Ovary (tissue), 10 donors: ENCODE measurements at regions of chr1 and their contacts with region 1.

Region 1: DNA sequence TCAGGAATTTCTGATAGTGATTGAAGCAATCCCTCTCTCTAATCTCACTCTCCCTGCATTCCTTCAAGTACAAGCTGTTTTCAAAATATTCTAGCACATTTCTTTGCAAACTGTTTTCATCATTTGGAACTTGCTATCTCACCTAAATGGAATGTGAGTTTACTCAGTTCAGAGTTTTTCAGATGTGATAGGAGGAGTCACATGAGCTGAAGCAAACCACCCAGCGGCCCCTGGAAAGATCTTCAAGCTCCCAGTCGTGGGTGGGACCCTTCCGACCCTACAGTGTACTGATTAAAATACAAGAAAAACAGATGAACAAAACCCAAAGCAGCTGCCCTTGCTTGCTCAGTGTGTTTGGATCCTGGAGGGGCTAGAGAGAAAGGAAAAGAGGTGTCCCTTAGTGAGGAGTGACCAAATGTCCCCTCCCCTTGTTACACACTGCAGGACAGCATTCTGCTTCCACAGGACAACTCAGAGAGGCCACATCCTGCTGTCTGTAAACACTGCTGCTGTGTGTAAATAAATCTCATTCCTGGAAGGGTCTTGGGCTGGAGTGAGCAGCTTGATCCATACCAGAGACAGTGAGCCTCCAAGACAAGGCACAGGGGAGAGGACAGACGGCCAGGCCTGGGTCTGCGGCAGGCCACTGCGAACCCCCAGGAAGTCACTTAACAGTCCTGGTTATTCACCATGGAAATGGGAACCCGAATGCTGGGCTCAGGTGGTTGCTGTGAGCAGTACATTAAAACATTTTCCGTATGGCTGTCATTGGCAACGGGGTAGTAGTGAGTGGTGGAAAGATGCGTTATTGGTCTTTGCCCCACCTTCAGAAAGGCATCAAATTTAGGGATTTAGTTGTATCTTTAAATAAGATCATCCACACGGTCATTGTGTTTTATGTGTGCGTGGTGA is 229.2 kb downstream of the RHOU start:
- DNase-seq: peak; percentile 50 to 82 (median 65)
- H3K4me3 ChIP-seq: no peak overlapping the region
- H3K27ac ChIP-seq: peak overlapping the region; percentile 57 to 70
- H3K4me1 ChIP-seq: peaks cover 7% of the 10 kb centered on the region
- H3K27me3 ChIP-seq: no peaks in the 10 kb centered on the region
- CTCF ChIP-seq: no peak
- EP300 ChIP-seq: no peak
- POLR2A ChIP-seq: no peak

Region 2: DNA sequence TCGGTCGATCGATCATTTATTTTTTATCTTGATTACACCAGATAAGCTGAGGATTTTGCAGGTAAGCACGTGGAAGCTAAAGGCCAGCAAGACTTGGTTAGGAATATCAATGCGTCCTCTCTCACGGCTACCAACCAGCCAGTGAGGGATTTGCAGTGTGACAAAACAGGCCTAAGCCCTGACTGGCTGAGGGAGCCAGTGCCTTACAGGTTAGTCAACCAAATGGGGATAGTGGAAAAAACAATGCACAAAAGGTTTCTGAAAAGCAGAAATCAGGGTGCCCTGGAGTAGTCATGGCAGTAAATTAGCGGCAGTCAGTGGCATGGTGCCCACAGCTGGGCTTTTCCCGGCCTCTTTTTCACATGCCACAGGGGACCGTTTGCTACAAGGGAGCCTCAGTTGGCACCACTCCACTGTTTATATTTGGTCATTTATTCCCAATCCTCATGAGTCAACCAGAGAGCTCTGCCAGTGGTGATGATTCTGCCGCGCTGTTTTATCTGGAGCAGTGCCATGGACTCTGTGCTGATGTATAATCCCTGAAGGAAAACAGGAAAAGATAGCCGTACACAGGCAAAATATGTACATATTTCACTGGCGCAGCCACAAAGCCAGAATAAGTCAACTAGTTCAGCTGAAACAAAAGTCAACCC is 61.5 kb before region 1 on chr1:
- intact Hi-C with region 1: no loop called
- DNase-seq: peak; percentile 88 to 93 (median 89)
- H3K4me3 ChIP-seq: no peak overlapping the region
- H3K27ac ChIP-seq: peak overlapping the region; percentile 28 to 65
- H3K4me1 ChIP-seq: peaks cover 15% of the 10 kb centered on the region
- H3K27me3 ChIP-seq: no peaks in the 10 kb centered on the region
- CTCF ChIP-seq: no peak
- EP300 ChIP-seq: no peak
- POLR2A ChIP-seq: no peak

Region 3: GRCh38 chr1:229227298-229227919 is 263.0 kb after region 1 on chr1:
- intact Hi-C with region 1: loop called in 1 of 4 experiments (anchors 10 kb)
- DNase-seq: peak; percentile 82 to 92 (median 88)
- H3K4me3 ChIP-seq: no peak overlapping the region
- H3K27ac ChIP-seq: no peak overlapping the region
- H3K4me1 ChIP-seq: peaks cover 10% of the 10 kb centered on the region
- H3K27me3 ChIP-seq: no peaks in the 10 kb centered on the region
- CTCF ChIP-seq: peak; percentile 79 to 87 (median 84)
- EP300 ChIP-seq: no peak
- POLR2A ChIP-seq: no peak